PC-3 (cell line): ENCODE measurements at regions of chr16 and their contacts with region 1.

Region 1: DNA sequence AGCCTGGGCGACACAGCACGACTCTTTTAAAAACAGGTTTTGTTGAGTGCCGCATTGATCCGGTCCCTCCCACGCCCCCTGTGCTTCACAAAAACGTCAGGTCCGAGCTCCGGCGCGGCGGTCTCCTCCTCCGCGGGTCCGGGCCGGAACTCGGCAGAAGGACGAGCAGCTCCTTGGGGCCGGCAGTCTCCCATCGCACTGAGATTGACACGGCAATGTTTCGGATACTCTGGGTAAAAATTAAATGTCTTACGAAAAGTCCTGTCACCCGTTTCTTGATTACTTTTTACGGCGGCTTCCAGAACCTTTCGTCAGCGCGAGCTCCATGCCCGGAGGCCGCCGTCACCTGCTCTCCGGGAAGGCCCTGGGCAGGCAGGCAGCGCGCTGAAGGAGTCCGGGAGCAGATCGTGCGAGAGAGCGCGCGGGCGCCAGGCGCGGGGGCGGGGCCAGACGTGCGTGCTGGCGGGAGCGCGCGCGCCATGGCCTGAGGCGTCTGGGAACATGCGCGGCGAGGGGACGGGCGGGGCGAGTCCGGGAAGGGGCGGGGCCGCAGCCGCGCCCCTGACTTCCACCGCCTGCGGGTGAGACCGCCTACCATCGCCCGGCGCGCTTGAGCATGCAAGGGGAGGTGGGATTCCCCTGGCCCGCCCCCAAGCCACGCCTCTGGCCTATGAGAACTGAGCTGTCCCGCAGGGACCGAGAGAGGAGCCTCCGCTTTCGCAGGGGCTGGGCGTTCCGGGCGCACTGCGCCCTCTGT is 11.7 kb upstream of the SRL start:
- DNase-seq: peak; percentile 96
- ATAC-seq: peak; percentile 97
- H3K4me3 ChIP-seq: peak overlapping the region; percentile 80
- H3K27ac ChIP-seq: peak overlapping the region; percentile 56
- H3K4me1 ChIP-seq: no peaks in the 10 kb centered on the region
- H3K27me3 ChIP-seq: no peaks in the 10 kb centered on the region
- CTCF ChIP-seq: no peak

Region 2: GRCh38 chr16:3983081-3983520 is 270.5 kb before region 1 on chr16:
- CTCF ChIA-PET with region 1: interaction called, 11 read pairs
- POLR2A ChIA-PET with region 1: no interaction called
- intact Hi-C with region 1: loop called (anchors 1 kb)
- DNase-seq: peak; percentile 75
- ATAC-seq: peak; percentile 96
- H3K4me3 ChIP-seq: no peak overlapping the region
- H3K27ac ChIP-seq: no peak overlapping the region
- H3K4me1 ChIP-seq: peaks cover 8% of the 10 kb centered on the region; the same call in 1 of the 2 replicates
- H3K27me3 ChIP-seq: no peaks in the 10 kb centered on the region
- CTCF ChIP-seq: peak; percentile 77

Region 3: DNA sequence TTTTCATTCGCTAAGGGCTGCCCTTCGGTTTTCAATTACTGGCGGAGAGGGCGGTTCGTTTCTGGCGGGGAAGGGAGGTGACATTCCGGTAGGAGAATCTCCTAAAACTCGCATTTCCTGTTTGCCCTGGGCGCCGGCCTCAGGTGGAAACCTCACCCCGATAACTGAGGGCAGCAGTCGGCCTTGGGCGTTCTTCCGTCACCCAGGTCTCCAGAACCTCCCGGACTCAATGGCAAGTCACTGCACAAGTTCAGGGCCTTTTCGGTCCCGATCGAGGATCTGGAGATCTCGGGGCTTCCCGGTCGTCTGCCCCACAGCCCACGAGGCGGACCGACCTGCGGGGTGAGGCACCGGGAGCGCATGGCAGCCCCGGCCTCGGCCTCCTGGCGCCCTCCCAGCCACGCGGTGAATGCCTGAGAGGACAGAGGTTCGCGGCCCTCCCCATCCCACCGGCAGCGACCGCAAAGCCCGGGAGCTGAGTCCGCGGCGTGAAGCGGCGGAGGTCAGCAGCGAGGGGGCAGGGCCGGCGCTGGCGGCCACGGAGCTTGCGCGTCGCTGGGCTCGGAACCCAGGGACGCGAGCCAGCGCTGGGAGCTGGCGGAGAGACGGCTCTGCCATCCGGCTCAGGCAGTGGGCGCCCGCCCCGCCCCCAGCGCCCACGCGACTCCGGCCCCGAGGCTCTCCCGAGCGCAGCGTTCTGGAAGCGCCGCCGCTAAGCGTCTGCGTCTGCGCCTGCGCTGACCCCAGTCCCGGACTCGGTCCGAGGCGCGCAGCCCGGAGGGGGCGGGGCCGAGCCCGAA is 70.1 kb before region 1 on chr16:
- CTCF ChIA-PET with region 1: no interaction called
- POLR2A ChIA-PET with region 1: no interaction called
- intact Hi-C with region 1: loop called (anchors 1 kb)
- DNase-seq: peak; percentile 94
- ATAC-seq: peak; percentile 90
- H3K4me3 ChIP-seq: peak overlapping the region; percentile 82
- H3K27ac ChIP-seq: peak overlapping the region; percentile 94
- H3K4me1 ChIP-seq: peaks cover 3% of the 10 kb centered on the region; the same call in 1 of the 2 replicates
- H3K27me3 ChIP-seq: no peaks in the 10 kb centered on the region
- CTCF ChIP-seq: no peak

Region 4: DNA sequence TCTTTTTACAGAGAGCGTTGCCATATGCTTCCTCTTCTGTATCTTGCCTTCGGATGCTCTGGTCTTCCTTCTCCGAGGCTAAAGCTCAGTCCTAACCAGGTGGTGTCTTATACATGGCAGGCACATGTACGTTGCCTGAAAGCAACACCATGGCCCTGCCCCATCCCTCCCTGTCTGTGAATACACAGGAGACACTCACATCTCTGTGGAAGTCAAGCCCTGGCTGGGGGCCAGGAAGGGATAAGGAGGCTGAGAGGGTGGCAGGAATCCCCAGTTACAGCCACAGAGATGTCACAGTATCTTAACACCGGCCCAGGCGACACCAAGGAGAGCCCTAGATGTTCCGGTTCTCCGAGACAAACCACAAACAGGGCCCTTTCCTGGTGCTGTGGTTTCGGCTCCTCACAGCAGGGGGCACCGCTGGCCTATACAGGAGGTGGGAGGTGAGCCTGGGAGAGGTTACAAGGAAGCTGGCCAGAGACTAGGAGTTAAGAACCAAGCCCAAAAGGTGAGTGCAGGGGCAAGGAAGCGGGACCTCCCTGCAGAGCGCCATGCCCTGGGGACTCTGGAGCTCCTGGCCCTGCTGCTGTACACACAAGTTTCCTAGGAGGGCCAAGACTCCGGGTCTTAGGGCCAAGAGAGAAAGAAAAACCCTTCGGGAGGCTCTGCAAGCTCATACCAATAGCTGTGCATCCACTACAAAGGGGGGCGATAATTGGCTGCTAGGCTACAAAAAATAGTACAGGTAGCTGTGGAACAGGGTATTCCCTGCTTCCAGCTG is 53.4 kb before region 1 on chr16:
- CTCF ChIA-PET with region 1: interaction called, 32 read pairs
- POLR2A ChIA-PET with region 1: interaction called, 3 read pairs
- intact Hi-C with region 1: no loop called
- DNase-seq: peak; percentile 69
- ATAC-seq: peak; percentile 91
- H3K4me3 ChIP-seq: no peak overlapping the region
- H3K27ac ChIP-seq: no peak overlapping the region
- H3K4me1 ChIP-seq: no peaks in the 10 kb centered on the region
- H3K27me3 ChIP-seq: no peaks in the 10 kb centered on the region
- CTCF ChIP-seq: peak; percentile 71

Region 5: DNA sequence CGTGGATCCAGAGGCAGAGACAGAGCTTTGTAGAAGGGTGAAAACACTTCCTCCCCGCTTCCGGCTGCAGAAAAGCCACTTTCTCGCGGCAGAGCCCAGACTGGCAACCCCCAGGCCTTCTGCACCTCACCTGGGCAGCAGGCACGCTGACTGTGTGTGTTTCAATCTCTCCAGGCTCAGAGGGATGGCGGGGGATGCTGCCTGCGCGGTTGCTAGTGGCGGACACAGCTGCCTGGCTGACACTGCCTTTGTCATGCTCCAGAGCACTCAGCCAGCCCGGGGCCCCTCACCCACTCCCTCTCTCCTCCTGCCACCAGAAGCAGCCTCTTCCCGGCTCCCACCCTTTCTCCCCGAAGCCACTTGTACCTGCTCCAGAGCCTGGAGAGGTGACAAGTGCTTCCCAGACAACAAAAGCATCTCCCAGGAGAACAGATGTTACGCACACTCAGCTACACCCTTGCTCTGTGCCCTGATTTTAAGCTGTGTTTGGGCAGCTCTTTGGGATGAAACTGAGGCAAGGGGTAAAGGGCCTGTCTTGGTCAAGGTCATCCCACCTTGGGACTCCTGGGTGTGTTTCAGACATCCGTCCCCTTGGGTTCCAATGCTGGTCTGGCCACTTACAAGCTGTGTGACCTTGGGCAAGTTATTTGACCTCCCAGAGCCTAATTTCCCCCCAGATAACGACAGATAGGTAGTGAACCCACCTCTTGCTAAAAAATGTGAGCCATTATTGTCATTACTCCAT is 53.1 kb after region 1 on chr16:
- CTCF ChIA-PET with region 1: no interaction called
- POLR2A ChIA-PET with region 1: no interaction called
- intact Hi-C with region 1: no loop called
- DNase-seq: no peak
- ATAC-seq: no peak
- H3K4me3 ChIP-seq: peak overlapping the region; percentile 77
- H3K27ac ChIP-seq: peak overlapping the region; percentile 38; the same call in 1 of the 2 replicates
- H3K4me1 ChIP-seq: peaks cover 23% of the 10 kb centered on the region
- H3K27me3 ChIP-seq: no peaks in the 10 kb centered on the region
- CTCF ChIP-seq: no peak

Region 6: DNA sequence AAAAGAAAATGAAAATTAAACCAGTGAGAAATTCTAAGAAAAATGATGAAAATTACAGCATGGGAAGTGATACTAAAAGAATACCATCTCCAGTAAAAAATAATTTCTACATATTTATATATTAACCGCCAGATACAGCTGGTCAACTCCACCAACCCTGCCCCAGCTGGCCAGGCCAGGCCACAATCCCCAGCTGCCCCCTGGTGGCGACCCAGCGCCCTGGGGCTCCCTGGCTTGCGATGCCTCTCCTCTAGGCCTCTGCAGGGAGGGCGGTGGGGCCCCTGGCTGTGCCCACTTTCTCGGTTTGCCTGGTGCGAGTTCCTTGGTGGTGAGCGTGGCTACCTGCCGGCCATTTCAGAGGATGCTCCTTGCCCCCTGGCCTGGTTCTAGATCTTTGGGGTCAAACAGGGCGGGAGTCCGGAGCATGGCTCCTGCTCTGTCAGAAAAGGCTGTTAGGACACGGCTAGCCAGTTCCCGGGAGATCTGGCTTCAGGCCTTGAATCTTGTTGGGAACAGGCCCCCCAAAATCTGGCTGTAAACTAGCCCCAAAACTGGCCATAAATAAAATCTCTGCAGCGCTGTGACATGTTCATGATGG is 76.8 kb after region 1 on chr16:
- CTCF ChIA-PET with region 1: interaction called, 21 read pairs
- POLR2A ChIA-PET with region 1: interaction called, 3 read pairs
- intact Hi-C with region 1: no loop called
- DNase-seq: peak; percentile 66
- ATAC-seq: peak; percentile 93
- H3K4me3 ChIP-seq: no peak overlapping the region
- H3K27ac ChIP-seq: no peak overlapping the region
- H3K4me1 ChIP-seq: no peaks in the 10 kb centered on the region
- H3K27me3 ChIP-seq: no peaks in the 10 kb centered on the region
- CTCF ChIP-seq: peak; percentile 83